ENCODE measurements at regions of chr16 and their contacts with region 1.

Region 1: DNA sequence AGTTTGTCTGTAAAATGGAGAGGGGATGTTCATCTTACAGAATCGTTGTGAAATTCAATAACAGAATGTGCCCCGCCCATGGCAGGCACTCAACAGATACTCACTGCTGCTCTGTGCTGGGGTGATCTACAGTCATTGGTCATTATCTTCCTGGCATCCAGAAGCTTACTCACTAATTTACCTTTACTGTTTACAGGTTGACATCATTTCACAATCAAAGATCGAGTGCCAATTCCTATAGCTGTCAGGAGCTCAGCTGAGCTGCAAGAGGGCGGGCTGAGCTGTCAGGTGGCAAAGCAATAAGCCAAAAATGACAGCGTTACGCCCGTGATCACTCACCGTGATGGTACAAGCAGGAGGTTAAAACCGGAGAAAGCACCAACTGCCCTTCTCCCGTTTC is 51.2 kb downstream of the LITAF start:
- DNase-seq: peak; percentile 72
- ATAC-seq: peak; percentile 56
- H3K4me3 ChIP-seq: peak overlapping the region; percentile 35; the same call in 1 of the 2 replicates
- H3K27ac ChIP-seq: no peak overlapping the region
- H3K4me1 ChIP-seq: peaks cover 7% of the 10 kb centered on the region; the same call in 1 of the 2 replicates
- H3K27me3 ChIP-seq: no peaks in the 10 kb centered on the region
- CTCF ChIP-seq: no peak

Region 2: GRCh38 chr16:11407047-11407982 is 128.2 kb before region 1 on chr16:
- CTCF ChIA-PET with region 1: no interaction called
- POLR2A ChIA-PET with region 1: no interaction called
- intact Hi-C with region 1: loop called (anchors 5 kb)
- DNase-seq: peak; percentile 72
- ATAC-seq: peak; percentile 57
- H3K4me3 ChIP-seq: no peak overlapping the region
- H3K27ac ChIP-seq: no peak overlapping the region
- H3K4me1 ChIP-seq: no peaks in the 10 kb centered on the region
- H3K27me3 ChIP-seq: no peaks in the 10 kb centered on the region
- CTCF ChIP-seq: peak; percentile 74

Region 3: DNA sequence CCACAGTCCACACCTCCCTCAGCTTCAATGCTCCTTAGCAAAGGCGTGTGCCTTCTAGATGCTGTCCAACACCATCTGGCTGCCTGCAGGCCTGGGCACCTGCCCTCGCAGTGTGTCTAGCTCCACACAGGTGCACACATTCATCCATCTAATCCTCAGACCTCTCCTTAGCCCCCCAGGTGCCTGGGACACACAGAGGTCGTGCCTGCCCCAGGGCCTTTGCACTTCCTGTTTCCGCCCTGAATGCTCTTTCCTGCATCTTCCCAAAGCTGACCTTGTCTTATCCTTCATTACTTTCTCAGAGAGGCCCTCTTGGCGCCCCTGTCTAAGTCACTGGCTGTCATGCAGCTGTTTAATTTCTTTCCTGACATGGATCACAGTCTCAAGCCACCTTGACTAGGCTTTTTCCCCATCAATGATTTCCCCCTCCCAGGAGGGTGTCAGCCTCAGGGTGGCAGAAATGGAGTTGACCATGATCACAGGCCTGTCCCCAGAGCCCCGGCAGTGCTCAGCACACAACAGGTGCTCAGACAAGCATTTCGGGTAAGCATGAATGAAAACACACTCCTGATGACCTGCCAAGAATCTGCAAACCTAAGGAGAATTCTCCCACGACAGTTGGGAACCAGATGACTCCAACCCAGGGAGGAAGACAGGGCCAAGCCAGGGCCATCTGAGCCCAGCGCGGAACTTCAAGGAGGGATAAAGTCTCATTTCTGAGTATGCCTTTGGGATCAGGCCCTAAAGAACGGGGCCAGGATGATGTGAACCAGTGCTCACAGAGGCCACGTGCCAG is 25.1 kb before region 1 on chr16:
- CTCF ChIA-PET with region 1: no interaction called
- POLR2A ChIA-PET with region 1: no interaction called
- intact Hi-C with region 1: no loop called
- DNase-seq: no peak
- ATAC-seq: no peak
- H3K4me3 ChIP-seq: no peak overlapping the region
- H3K27ac ChIP-seq: no peak overlapping the region
- H3K4me1 ChIP-seq: peaks cover 3% of the 10 kb centered on the region; the same call in 1 of the 2 replicates
- H3K27me3 ChIP-seq: no peaks in the 10 kb centered on the region
- CTCF ChIP-seq: no peak

Region 4: GRCh38 chr16:11639925-11640899 is 104.7 kb after region 1 on chr16:
- CTCF ChIA-PET with region 1: interaction called, 7 read pairs
- POLR2A ChIA-PET with region 1: no interaction called
- intact Hi-C with region 1: loop called (anchors 5 kb)
- DNase-seq: peak; percentile 56
- ATAC-seq: no peak; the same call in 1 of the 2 replicates
- H3K4me3 ChIP-seq: no peak overlapping the region
- H3K27ac ChIP-seq: peak overlapping the region; percentile 63
- H3K4me1 ChIP-seq: peaks cover 17% of the 10 kb centered on the region
- H3K27me3 ChIP-seq: no peaks in the 10 kb centered on the region
- CTCF ChIP-seq: no peak

Region 5: GRCh38 chr16:11819798-11820197 is 284.3 kb after region 1 on chr16:
- CTCF ChIA-PET with region 1: no interaction called
- POLR2A ChIA-PET with region 1: no interaction called
- intact Hi-C with region 1: loop called (anchors 10 kb)
- DNase-seq: no peak
- ATAC-seq: no peak
- H3K4me3 ChIP-seq: no peak overlapping the region
- H3K27ac ChIP-seq: no peak overlapping the region
- H3K4me1 ChIP-seq: no peaks in the 10 kb centered on the region
- H3K27me3 ChIP-seq: no peaks in the 10 kb centered on the region
- CTCF ChIP-seq: no peak

Measured in PC-3 (cell line).